Activated naive CD4-positive, alpha-beta T cell treated with anti-CD3 and anti-CD28 coated beads for 36 hours (primary cell): ENCODE measurements at regions of chr4 and their contacts with region 1.

Region 1: DNA sequence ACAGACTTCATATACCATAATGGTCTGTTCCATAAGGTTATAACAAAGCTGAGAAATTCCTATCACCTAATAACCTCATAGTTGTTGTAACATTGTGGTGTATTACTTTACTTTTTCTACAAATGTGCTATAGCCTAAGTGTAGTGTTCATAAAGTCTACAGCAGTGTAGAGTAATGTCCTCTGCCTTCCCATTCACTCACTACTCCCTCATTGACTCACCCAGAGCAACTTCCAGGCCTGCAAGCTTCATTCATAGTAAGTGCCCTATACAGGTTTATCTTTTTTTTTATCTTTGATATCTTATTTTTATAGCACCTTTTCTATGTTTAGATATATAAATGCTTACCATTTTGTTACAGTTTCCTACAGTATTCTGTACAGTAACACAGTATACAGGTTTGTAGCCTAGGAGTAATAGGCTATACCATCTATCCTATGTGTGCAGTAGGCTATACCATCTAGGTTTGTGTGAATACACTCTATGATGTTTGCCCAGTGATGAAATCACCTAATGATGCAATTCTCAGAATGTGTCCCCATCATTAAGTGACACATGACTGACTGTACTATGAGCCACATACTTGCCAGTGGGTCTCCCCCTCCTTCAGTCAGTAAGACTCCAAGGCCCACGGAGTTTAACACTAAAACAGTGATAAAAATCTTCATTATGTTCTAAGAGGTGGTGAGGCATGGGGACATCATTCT is 299.9 kb downstream of the UNC5C start:
- DNase-seq: peak; percentile 4
- H3K4me3 Mint-ChIP-seq: no peak overlapping the region
- H3K27ac Mint-ChIP-seq: no peak overlapping the region
- H3K4me1 Mint-ChIP-seq: peaks cover 8% of the 10 kb centered on the region
- H3K27me3 Mint-ChIP-seq: no peaks in the 10 kb centered on the region

Region 2: DNA sequence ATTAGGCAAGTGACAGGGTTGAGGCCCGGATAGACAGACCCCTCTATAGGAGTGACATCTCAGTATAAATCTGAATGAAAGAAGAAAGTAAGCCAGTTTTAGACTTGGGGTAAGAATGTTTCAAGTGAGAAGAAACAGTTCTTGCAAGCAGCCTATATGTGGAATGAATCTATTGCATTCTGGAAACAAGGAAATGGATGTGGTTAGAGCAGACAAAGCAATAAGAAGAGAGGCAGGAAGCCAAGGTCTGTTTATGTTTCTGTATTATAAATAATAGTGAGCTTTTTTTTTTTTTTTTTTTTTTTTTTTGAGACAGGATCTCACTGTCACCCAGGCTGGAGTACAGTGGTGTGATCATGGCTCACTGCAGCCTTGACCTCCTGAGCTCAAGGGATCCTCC is 44.1 kb after region 1 on chr4:
- CTCF ChIA-PET with region 1: no interaction called
- intact Hi-C with region 1: loop called (anchors 2 kb)
- DNase-seq: no peak
- H3K4me3 Mint-ChIP-seq: no peak overlapping the region
- H3K27ac Mint-ChIP-seq: no peak overlapping the region
- H3K4me1 Mint-ChIP-seq: peaks cover 29% of the 10 kb centered on the region
- H3K27me3 Mint-ChIP-seq: no peaks in the 10 kb centered on the region